Activated T-helper 1 cell treated with anti-CD3 and anti-CD28 coated beads, Interleukin-12 subunit alpha, Interleukin-12 subunit beta, Interleukin-2, Interleukin-4 antibody, amounts not matched to agents 30 ng/mL and 10 ng/mL and 1 ng/mL, durations not matched to agents 14 hours and 24 hours and 36 hours (primary cell): ENCODE measurements at regions of chr5 and their contacts with region 1.

Region 1: GRCh38 chr5:80754900-80755299 is 100.1 kb upstream of the DHFR start:
- DNase-seq: peak; percentile 16
- H3K4me3 Mint-ChIP-seq: peak overlapping the region; percentile 68
- H3K27ac Mint-ChIP-seq: peak overlapping the region; percentile 97
- H3K4me1 Mint-ChIP-seq: peaks cover 58% of the 10 kb centered on the region
- H3K27me3 Mint-ChIP-seq: no peaks in the 10 kb centered on the region

Region 2: GRCh38 chr5:79612667-79613198 is 1142.2 kb before region 1 on chr5:
- intact Hi-C with region 1: loop called (anchors 5 kb)
- DNase-seq: no peak
- H3K4me3 Mint-ChIP-seq: peak overlapping the region; percentile 91
- H3K27ac Mint-ChIP-seq: peak overlapping the region; percentile 97
- H3K4me1 Mint-ChIP-seq: peaks cover 45% of the 10 kb centered on the region
- H3K27me3 Mint-ChIP-seq: no peaks in the 10 kb centered on the region

Region 3: GRCh38 chr5:80437326-80437725 is 317.6 kb before region 1 on chr5:
- intact Hi-C with region 1: no loop called
- DNase-seq: no peak
- H3K4me3 Mint-ChIP-seq: no peak overlapping the region
- H3K27ac Mint-ChIP-seq: no peak overlapping the region
- H3K4me1 Mint-ChIP-seq: no peaks in the 10 kb centered on the region
- H3K27me3 Mint-ChIP-seq: no peaks in the 10 kb centered on the region

Region 4: DNA sequence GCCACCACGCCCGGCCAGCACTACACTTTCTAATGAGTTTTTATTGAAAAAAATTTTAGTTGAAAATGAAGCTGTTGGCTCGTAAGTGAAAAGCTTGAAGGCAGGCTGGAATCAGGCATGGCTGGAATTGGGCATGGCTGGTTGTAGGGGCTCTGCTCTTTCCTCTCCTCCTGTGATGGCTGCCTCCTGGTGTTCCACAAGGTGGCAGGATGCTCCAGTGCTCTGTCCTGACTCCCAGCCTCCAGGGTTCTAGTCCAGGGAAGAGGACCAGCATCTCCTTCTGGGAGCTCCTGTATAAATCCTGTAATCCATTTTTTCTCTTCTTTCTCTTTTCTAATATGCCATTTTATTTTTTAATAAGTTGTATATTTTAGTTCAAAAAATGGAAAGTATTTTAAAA is 43.0 kb before region 1 on chr5:
- intact Hi-C with region 1: loop called (anchors 5 kb)
- DNase-seq: no peak
- H3K4me3 Mint-ChIP-seq: no peak overlapping the region
- H3K27ac Mint-ChIP-seq: peak overlapping the region; percentile 47
- H3K4me1 Mint-ChIP-seq: peaks cover 34% of the 10 kb centered on the region
- H3K27me3 Mint-ChIP-seq: no peaks in the 10 kb centered on the region

Region 5: GRCh38 chr5:80864706-80865435 is 110.0 kb after region 1 on chr5:
- intact Hi-C with region 1: loop called (anchors 1 kb)
- DNase-seq: no peak
- H3K4me3 Mint-ChIP-seq: peak overlapping the region; percentile 3
- H3K27ac Mint-ChIP-seq: peak overlapping the region; percentile 38
- H3K4me1 Mint-ChIP-seq: peaks cover 65% of the 10 kb centered on the region
- H3K27me3 Mint-ChIP-seq: no peaks in the 10 kb centered on the region

Region 6: DNA sequence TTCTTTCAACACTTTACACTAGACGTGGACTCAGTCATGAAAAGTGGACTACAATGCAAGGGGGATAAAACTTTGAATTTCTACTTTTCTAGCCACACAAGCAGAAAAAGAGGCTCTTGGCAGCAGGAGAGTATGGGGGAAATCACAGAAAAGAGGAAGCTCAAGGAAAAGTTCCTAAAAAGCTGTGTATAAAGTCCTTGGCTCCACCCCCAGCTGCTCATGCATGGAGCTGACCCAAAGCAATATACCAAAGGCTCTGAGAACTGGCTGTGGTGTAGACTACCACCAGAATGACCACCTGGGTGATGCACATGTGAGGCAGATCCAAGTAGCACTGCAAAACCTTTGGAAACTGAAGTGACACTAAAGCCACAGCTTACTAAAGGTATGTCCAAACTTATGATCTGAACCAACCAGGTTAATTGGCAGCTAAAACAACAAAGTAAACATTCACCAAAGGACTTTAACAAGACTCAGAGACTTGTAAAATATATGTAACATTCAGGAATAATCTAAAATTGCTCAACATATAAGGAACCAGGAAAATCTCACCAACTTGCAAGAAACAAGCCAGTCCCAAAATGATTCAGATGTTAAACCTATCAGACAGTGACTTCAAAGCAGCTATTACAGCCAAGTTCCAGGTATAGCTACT is 149.8 kb after region 1 on chr5:
- intact Hi-C with region 1: no loop called
- DNase-seq: no peak
- H3K4me3 Mint-ChIP-seq: no peak overlapping the region
- H3K27ac Mint-ChIP-seq: no peak overlapping the region
- H3K4me1 Mint-ChIP-seq: no peaks in the 10 kb centered on the region
- H3K27me3 Mint-ChIP-seq: no peaks in the 10 kb centered on the region

Region 7: GRCh38 chr5:81006947-81007636 is 252.2 kb after region 1 on chr5:
- intact Hi-C with region 1: loop called (anchors 1 kb)
- DNase-seq: peak; percentile 50
- H3K4me3 Mint-ChIP-seq: peak overlapping the region; percentile 71
- H3K27ac Mint-ChIP-seq: peak overlapping the region; percentile 81
- H3K4me1 Mint-ChIP-seq: peaks cover 54% of the 10 kb centered on the region
- H3K27me3 Mint-ChIP-seq: no peaks in the 10 kb centered on the region